ENCODE measurements at regions of chr1 and their contacts with region 1.

Region 1: DNA sequence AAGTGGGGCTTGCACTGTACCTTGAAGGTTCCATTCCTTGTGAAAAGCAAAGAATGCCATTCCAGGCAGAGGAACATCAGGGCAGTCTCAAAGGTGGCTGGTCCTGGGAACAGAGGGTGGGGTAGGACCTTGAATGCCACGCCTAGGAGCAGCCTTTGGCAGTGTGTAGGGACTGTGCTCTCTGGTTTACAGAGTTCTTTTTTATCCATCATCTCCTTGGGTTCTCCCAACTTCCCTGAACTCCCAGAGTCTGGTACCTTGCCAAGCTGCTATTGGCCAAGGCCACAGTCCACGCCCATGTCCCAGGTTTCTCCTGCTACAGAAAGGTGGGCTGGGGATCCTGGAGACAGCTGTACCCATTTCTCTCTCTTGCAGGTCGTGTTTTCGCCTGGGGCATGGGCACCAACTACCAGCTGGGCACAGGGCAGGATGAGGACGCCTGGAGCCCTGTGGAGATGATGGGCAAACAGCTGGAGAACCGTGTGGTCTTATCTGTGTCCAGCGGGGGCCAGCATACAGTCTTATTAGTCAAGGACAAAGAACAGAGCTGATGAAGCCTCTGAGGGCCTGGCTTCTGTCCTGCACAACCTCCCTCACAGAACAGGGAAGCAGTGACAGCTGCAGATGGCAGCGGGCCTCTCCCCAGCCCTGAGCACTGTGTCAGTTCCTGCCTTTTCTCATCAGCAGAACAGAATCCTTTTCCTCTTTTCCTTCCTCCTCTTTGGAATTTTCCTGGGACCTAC is 15.3 kb upstream of the TRNAU1AP start:
- DNase-seq: no peak
- ATAC-seq: peak in 3 of 4 donors; percentile 28 to 81 (median 81)
- H3K4me3 ChIP-seq: no peak overlapping the region
- H3K27ac ChIP-seq: no peak overlapping the region
- H3K4me1 ChIP-seq: no peaks in the 10 kb centered on the region
- H3K27me3 ChIP-seq: no peaks in the 10 kb centered on the region
- CTCF ChIP-seq: no peak
- POLR2A ChIP-seq: no peak

Region 2: GRCh38 chr1:28860332-28861073 is 322.9 kb after region 1 on chr1:
- intact Hi-C with region 1: loop called in 1 of 10 experiments (anchors 10 kb)
- DNase-seq: no peak
- ATAC-seq: no peak
- H3K4me3 ChIP-seq: no peak overlapping the region
- H3K27ac ChIP-seq: no peak overlapping the region
- H3K4me1 ChIP-seq: no peaks in the 10 kb centered on the region
- H3K27me3 ChIP-seq: peaks cover 0 to 3% (median 0%) of the 10 kb centered on the region in 9 donors
- CTCF ChIP-seq: no peak
- POLR2A ChIP-seq: no peak